CD8-positive, alpha-beta T cell (primary cell): ENCODE measurements at regions of chr2 and their contacts with region 1.

Region 1: GRCh38 chr2:193428336-193428818 is 1233.6 kb upstream of the TMEFF2 start:
- DNase-seq: no peak
- ATAC-seq: no peak
- H3K4me3 ChIP-seq: no peak overlapping the region
- H3K4me3 Mint-ChIP-seq: no peak overlapping the region
- H3K27ac ChIP-seq: no peak overlapping the region
- H3K27ac Mint-ChIP-seq: no peak overlapping the region
- H3K4me1 ChIP-seq: no peaks in the 10 kb centered on the region
- H3K4me1 Mint-ChIP-seq: no peaks in the 10 kb centered on the region
- H3K27me3 ChIP-seq: no peaks in the 10 kb centered on the region
- H3K27me3 Mint-ChIP-seq: no peaks in the 10 kb centered on the region
- CTCF ChIP-seq: no peak

Region 2: GRCh38 chr2:193935114-193935513 is 506.7 kb after region 1 on chr2:
- CTCF ChIA-PET with region 1: no interaction called
- POLR2A ChIA-PET with region 1: no interaction called
- intact Hi-C with region 1: loop called in 1 of 2 experiments (anchors 5 kb)
- DNase-seq: peak in 1 of 9 experiments; percentile 1
- ATAC-seq: no peak
- H3K4me3 ChIP-seq: no peak overlapping the region
- H3K4me3 Mint-ChIP-seq: no peak overlapping the region
- H3K27ac ChIP-seq: no peak overlapping the region
- H3K27ac Mint-ChIP-seq: no peak overlapping the region
- H3K4me1 ChIP-seq: no peaks in the 10 kb centered on the region
- H3K4me1 Mint-ChIP-seq: no peaks in the 10 kb centered on the region
- H3K27me3 ChIP-seq: no peaks in the 10 kb centered on the region
- H3K27me3 Mint-ChIP-seq: no peaks in the 10 kb centered on the region
- CTCF ChIP-seq: no peak